Tibial artery (tissue), 4 donors: ENCODE measurements at regions of chr10 and their contacts with region 1.

Region 1: GRCh38 chr10:102713814-102714620 is at the start of gene ARL3:
- DNase-seq: peak; percentile 98 to 99
- H3K4me3 ChIP-seq: peak within 1 kb of the TSS; percentile 96 to 98
- H3K27ac ChIP-seq: peak within 1 kb of the TSS; percentile 87 to 90
- H3K4me1 ChIP-seq: peaks cover 0 to 20% (median 10%) of the 10 kb centered on the region in 4 donors
- H3K27me3 ChIP-seq: no peaks in the 10 kb centered on the region
- CTCF ChIP-seq: peak in 1 of 2 experiments; percentile 54

Region 2: DNA sequence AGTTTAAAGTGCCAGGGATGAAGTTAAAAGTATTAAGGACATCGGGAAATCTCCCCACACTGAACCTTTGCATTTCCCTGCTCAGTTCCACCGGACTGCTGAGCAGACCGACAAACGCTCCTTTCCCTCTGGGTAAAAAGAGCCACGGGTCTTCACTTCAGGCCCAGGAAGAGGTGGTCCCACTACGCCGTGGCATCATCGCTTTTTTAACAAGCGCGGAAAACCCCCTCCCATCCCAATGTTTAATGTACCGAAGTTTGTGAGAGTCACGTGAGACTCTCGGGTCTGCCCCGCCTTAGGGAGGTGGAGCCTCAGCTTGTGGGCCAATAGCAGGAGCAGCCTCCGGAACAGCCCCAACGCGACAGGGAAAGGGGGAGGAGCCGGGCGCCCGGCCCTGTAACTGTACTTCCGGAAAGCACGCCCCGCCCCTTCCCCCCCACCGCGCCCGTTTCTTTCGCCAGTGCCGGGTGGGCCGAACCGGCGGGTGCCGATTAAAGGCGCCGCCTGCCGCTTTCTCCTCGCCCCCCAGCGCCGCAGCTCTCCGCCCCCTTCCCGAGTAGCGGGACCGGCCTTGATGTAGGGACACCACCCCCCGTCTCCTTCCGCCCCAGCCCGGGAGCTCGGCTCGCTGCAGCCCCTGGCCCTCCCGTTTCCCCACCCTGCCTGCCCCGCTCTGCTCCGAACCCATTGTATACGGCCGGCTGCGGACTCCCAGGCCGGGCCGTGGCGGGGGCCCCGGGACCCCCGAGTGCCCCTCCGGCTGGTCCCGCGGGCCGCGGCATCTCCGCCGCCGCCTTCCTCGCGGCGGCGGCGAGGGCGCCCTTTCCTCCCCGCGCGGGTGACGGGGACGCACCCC is 71.9 kb before region 1 on chr10:
- intact Hi-C with region 1: loop called (anchors 5 kb)
- DNase-seq: peak; percentile 99
- H3K4me3 ChIP-seq: peak overlapping the region; percentile 86 to 90
- H3K27ac ChIP-seq: peak overlapping the region; percentile 97 to 99
- H3K4me1 ChIP-seq: peaks cover 0 to 10% (median 7%) of the 10 kb centered on the region in 4 donors
- H3K27me3 ChIP-seq: no peaks in the 10 kb centered on the region
- CTCF ChIP-seq: no peak

Region 3: DNA sequence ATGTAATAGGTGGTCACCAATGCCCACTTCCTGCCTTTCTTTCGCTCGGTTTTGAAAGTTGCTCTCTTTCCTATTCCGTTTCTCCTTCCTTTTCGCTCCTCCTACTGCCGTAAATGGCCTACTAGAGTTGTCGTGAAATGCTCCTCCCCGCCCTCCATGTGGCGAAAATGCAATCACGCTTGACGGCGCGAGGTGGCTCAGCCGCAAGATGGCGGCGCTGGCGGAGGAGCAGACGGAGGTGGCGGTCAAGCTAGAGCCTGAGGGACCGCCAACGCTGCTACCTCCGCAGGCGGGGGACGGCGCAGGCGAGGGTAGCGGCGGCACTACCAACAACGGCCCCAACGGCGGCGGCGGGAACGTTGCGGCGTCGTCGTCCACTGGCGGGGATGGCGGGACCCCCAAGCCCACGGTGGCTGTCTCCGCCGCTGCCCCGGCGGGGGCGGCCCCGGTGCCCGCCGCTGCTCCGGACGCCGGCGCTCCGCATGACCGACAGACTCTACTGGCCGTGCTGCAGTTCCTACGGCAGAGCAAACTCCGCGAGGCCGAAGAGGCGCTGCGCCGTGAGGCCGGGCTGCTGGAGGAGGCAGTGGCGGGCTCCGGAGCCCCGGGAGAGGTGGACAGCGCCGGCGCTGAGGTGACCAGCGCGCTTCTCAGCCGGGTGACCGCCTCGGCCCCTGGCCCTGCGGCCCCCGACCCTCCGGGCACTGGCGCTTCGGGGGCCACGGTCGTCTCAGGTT is 653.9 kb after region 1 on chr10 and contains the start of gene TAF5:
- intact Hi-C with region 1: loop called (anchors 10 kb)
- DNase-seq: peak; percentile 89 to 94
- H3K4me3 ChIP-seq: peak within 1 kb of the TSS; percentile 68 to 98
- H3K27ac ChIP-seq: peak within 1 kb of the TSS; percentile 80 to 94
- H3K4me1 ChIP-seq: peaks cover 0 to 20% (median 15%) of the 10 kb centered on the region in 4 donors
- H3K27me3 ChIP-seq: no peaks in the 10 kb centered on the region
- CTCF ChIP-seq: peak in 1 of 2 experiments; percentile 19